ENCODE measurements at regions of chr1 and their contacts with region 1.

Region 1: GRCh38 chr1:205354259-205354904 is 2.3 kb downstream of the KLHDC8A start:
- DNase-seq: no peak
- H3K4me3 ChIP-seq: no peak overlapping the region
- H3K27me3 ChIP-seq: peaks cover 29% of the 10 kb centered on the region
- CTCF ChIP-seq: peak; percentile 88

Region 2: DNA sequence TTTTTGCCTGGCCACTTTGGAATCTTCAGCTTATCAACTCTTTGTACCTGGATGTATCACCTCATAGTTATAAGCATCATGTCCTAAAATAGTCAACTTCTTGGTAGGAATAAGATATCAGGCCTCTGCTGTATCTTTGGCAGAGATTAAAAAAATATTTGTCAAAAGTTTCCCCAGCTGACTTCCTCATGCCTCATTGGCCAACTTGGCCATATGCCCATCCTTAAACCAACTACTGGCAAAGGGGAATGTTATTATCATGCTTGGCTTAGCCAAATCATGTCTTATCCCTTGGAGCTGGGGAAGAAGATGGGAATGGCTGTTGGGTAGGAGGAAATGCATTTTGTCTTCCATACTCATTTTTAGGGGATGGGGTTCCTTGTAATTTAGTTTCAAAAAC is 460.4 kb before region 1 on chr1:
- CTCF ChIA-PET with region 1: no interaction called
- POLR2A ChIA-PET with region 1: no interaction called
- DNase-seq: no peak
- H3K4me3 ChIP-seq: no peak overlapping the region
- H3K27me3 ChIP-seq: no peaks in the 10 kb centered on the region
- CTCF ChIP-seq: no peak

Region 3: GRCh38 chr1:205273551-205273982 is 80.8 kb before region 1 on chr1:
- CTCF ChIA-PET with region 1: interaction called, 14 read pairs
- POLR2A ChIA-PET with region 1: no interaction called
- DNase-seq: no peak
- H3K4me3 ChIP-seq: no peak overlapping the region
- H3K27me3 ChIP-seq: no peaks in the 10 kb centered on the region
- CTCF ChIP-seq: peak; percentile 98

Region 4: DNA sequence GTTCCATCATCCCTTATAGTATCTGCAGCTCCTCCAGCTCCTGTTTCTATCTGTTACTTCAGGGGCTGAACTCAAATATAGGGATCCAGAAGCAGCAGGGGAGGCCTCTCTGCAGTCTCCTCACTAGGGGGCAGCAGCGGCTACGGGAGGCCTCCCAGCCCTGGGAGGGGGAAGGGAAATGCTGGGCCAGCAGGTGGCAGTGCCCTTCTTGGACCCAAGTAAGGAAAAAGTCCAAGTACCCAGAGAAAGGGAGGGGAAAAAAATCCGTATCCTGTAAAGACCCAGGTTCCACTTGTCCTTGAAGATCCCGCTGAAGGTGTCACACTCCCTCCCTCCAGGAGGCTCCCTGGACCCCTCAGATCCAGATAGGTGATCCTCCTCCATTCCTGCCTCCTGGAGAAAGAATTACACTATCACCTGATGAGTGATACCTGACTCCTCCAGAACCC is 18.7 kb before region 1 on chr1:
- CTCF ChIA-PET with region 1: interaction called, 23 read pairs
- POLR2A ChIA-PET with region 1: no interaction called
- DNase-seq: no peak
- H3K4me3 ChIP-seq: no peak overlapping the region
- H3K27me3 ChIP-seq: peaks cover 28% of the 10 kb centered on the region
- CTCF ChIP-seq: peak; percentile 99

Region 5: DNA sequence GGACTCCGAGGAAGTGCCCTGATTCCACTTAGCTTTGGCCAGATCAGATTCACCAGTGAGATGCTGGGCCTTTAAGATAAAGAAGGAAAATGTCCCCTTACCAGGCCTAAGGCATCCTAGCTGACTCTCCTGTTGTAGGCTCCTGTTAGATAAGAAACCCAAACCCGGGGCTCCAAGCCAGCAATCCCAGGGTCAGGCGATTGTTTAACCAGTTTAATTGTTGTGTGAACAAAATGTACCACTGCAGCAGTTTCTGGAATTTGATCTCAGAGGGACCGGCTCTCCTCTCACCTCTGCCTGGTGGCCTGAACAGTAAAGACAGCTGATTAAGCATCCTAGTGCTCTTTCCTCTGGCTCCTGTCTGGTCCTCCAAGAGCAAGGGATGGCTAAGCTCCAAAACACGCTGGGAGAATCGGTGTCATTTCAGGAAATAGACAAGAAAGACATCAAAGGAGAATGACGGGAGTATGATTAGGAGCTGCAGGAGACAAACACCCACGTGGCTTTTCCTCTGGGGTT is 11.6 kb after region 1 on chr1:
- CTCF ChIA-PET with region 1: interaction called, 47 read pairs
- POLR2A ChIA-PET with region 1: no interaction called
- DNase-seq: no peak
- H3K4me3 ChIP-seq: no peak overlapping the region
- H3K27me3 ChIP-seq: peaks cover 9% of the 10 kb centered on the region
- CTCF ChIP-seq: no peak

Region 6: DNA sequence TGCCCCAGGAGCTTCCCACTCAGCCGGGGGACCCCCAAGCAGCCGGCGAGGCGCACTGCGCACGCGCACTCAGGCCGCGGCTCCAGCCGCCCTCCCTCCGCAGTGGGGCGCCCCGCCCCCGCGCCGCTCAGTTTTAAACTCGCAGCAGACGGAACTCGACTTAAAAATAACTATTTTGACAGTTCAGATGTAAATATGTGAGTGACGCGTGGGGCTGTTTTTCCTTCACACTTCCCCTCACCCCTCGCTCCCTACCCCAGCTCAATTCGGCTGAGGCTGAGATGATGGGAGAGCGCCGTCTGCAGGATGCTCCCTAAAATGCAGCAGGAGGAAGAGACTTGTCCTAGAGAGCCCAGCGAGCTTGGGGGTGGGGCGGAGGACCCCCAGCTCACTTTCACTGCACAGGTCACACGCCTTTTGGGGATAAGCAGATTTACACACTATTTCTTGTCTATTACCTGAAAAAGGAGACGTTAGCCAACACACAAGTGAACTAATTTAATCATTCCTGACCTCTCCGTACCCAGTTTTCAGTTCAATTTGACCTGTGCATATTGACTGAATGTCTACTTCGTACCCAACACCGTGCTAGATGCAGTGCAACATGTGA is 76.4 kb after region 1 on chr1:
- CTCF ChIA-PET with region 1: interaction called, 29 read pairs
- POLR2A ChIA-PET with region 1: no interaction called
- DNase-seq: no peak
- H3K4me3 ChIP-seq: peak overlapping the region; percentile 32
- H3K27me3 ChIP-seq: peaks cover 30% of the 10 kb centered on the region
- CTCF ChIP-seq: peak; percentile 84